Ascending aorta (tissue), 2 donors: ENCODE measurements at regions of chr1 and their contacts with region 1.

Region 1: GRCh38 chr1:58816072-58816746 is 32.4 kb upstream of the JUN start:
- DNase-seq: peak; percentile 47 to 94
- H3K4me3 ChIP-seq: peak overlapping the region; percentile 64 to 83
- H3K27ac ChIP-seq: peak overlapping the region; percentile 86 to 97
- H3K4me1 ChIP-seq: peaks cover 5 to 25% of the 10 kb centered on the region in 2 donors
- H3K27me3 ChIP-seq: no peaks in the 10 kb centered on the region
- CTCF ChIP-seq: no peak

Region 2: DNA sequence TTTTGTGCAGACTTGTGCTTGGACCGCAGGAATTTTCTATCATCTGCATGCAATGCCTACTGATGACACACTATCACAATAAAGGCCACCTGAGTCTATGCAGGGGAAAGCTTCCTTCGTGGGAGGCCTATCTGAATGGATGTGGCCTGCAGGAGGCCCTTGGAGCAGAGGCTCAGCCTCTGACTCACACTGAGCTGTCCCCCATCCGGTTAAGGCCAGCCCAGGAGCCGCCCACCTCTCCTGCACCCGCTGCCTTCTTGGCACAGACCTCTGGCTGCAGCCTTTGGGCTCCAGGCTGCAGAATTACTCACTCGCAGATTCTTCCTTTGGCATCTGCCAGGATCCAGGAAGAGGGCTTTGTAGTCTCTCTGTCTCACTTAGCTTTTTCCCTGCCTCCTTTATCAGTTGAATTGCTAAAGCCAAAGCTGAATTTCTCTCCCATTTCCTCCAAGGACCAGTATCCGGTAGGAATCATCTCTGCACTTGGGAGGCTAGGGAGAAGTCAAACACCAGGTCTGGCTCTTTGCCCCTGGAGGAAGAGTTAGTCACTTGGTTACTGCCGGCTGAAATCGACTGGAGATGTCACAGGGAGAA is 32.7 kb after region 1 on chr1:
- intact Hi-C with region 1: loop called (anchors 2 kb)
- DNase-seq: peak; percentile 18 to 87
- H3K4me3 ChIP-seq: peak overlapping the region in 1 of 2 donors; percentile 17
- H3K27ac ChIP-seq: peak overlapping the region; percentile 27 to 65
- H3K4me1 ChIP-seq: peaks cover 8 to 9% of the 10 kb centered on the region in 2 donors
- H3K27me3 ChIP-seq: no peaks in the 10 kb centered on the region
- CTCF ChIP-seq: peak in 2 of 3 experiments; percentile 8 to 26

Region 3: DNA sequence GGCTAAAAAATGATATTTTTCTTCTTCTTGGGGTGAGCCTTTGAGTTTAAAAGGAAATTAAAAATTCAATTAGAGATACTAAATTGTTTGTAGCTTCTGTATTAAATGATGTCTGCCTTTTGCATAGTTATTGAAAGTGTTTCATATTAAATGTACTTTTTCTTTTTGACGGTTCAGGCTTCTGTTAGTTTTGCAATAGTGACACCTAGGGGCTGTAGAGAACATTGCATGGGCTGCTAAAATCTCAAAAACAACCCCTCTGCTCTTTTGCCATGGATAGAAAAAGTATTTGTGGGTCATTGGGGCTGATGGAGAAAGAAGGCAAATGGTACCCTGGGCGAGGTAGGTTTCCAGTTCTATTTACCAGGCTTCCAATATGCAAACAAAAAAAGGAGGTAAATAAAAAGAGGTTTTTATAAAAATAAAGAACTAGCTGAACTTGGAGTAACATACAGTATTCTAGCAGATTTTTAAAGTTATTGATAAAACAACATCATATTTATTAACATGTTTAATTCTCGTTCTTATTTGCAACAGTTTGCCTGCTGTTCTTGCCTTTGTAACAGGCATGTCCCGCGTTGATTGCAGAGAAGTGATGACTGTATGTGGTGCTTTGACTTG is 883.1 kb after region 1 on chr1:
- intact Hi-C with region 1: loop called (anchors 1 kb)
- DNase-seq: no peak
- H3K4me3 ChIP-seq: peak overlapping the region in 1 of 2 donors; percentile 23
- H3K27ac ChIP-seq: peak overlapping the region in 1 of 2 donors; percentile 38
- H3K4me1 ChIP-seq: peaks cover 3 to 18% of the 10 kb centered on the region in 2 donors
- H3K27me3 ChIP-seq: no peaks in the 10 kb centered on the region
- CTCF ChIP-seq: peak; percentile 88 to 95 (median 92)